GM10248 (cell line): ENCODE measurements at regions of chr1 and their contacts with region 1.

Region 1: DNA sequence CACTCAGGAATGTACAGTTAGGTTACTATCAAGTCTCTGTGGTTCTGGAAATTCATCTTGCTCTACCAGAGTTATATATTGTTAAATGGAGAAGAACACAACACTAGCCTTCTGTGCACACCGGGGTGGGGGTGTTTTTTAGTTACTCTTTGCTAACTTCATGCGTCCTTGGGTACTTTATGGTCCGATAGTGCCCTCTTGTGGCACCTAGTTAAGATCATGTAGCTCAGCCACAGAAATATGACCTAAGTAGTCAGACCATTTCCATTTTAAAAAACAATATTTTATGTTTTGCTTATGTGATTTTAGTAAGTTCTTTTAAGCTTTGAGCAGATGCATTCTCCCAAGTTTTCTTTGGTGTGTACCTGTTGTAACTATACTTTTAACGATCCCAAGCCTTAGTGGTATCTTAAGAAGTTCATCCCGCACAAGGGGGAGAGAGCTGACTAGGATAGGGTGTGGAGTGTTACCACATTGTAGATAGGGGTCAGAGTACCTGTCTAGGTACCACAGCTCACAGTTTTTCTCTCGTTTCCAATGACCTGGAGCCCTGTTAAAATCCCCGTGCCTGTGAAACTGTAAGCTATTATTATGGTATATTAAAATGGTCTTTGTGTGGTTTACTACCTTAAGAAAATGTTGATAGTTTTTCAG is 20.6 kb upstream of the SH3D21 start:
- DNase-seq: peak; percentile 71
- CTCF ChIP-seq: peak; percentile 43

Region 2: DNA sequence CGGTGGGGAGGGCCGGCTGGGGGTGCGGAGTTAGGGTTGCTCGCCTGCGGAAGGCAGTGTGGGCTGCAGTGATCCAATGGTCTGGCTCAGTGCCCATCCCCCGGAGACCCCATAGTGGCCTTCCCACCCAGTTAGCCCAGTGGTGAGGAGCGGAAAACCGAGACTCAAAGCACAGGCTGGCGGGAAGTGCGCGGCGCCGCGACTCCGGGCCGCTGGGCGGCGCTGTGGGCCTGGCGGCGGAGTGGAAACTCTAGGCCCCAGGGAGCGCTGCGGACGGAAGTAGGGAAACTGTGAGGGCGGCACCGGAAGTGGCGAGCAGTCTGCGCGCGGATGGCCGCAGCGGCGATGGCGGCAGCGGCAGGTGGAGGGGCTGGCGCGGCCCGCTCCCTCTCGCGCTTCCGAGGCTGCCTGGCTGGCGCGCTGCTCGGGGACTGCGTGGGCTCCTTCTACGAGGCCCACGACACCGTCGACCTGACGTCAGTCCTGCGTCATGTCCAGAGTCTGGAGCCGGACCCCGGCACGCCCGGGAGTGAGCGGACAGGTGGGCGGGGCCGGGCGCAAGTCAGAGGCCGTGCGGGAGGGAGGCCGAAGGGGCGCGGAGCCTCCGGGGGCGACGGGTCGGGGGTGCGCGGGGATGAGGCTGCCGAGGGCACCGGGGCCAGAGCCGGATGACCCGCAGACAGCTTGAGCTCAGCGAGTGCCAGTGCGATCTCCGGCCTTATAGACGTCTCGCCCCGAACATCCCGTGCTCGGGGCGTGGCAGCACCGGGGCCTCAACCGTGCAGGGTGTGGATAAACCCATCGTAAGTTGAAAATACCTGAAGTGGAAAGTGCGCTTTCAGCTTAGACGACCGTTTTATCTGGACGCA is 196.8 kb before region 1 on chr1 and contains the start of gene ADPRS:
- CTCF ChIA-PET with region 1: no interaction called
- POLR2A ChIA-PET with region 1: no interaction called
- DNase-seq: peak; percentile 94
- CTCF ChIP-seq: peak; percentile 98

Region 3: GRCh38 chr1:36134505-36135329 is 150.9 kb before region 1 on chr1:
- CTCF ChIA-PET with region 1: interaction called, 11 read pairs
- POLR2A ChIA-PET with region 1: no interaction called
- DNase-seq: peak; percentile 79
- CTCF ChIP-seq: peak; percentile 54

Region 4: GRCh38 chr1:36149237-36149972 is 136.2 kb before region 1 on chr1 and contains the start of gene TRAPPC3:
- CTCF ChIA-PET with region 1: interaction called, 45 read pairs
- POLR2A ChIA-PET with region 1: no interaction called
- DNase-seq: peak; percentile 98
- CTCF ChIP-seq: peak; percentile 99

Region 5: GRCh38 chr1:36223993-36224536 is 61.5 kb before region 1 on chr1 and contains the start of gene THRAP3:
- CTCF ChIA-PET with region 1: interaction called, 14 read pairs
- POLR2A ChIA-PET with region 1: no interaction called
- DNase-seq: peak; percentile 97
- CTCF ChIP-seq: no peak

Region 6: DNA sequence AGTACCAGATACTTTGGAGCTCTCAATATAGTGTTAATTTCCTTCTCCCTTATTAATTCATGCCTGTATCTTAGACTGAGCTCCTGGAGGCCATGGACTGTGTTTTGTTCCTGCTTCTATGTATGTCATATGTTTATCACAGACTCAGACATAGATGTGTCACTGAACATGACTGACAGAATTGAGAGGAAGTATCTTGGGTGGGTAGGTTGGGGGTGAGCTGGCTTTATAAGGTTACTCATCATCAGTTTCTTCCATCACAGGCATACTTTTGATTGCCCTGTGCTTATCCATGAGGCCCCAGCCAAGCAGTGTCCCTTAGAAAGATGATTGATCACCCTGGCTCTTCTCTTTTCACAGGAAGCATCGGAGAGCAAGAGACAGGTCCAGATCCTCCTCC is 15.0 kb after region 1 on chr1:
- CTCF ChIA-PET with region 1: interaction called, 26 read pairs
- POLR2A ChIA-PET with region 1: interaction called, 3 read pairs
- DNase-seq: no peak
- CTCF ChIP-seq: no peak

Region 7: DNA sequence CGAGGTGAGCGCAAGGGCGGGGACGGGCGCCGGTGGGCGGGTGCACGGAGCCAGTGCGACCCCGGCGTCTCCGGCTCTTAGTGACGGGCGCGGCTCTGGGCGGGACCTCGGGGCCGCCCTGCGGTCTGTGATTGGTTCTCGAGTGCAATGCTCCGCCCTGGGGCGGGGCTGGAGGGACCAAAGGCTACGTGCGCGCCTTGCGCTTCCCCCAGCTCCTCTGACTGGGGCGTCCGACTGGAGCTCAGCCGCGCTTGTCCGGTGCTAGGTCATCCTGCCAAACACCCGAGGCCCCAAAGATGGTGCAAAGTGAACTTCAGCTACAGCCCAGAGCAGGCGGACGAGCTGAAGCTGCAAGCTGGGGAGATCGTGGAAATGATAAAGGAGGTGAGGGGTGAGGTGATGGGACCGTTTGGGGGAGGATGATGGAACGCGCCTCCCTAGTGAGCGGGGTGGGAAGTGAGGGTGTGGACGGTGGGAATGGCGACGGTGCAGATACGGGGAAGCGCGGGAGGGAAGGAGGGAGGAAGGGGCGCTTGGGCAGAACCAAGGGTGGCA is 21.4 kb after region 1 on chr1:
- CTCF ChIA-PET with region 1: interaction called, 16 read pairs
- POLR2A ChIA-PET with region 1: interaction called, 3 read pairs
- DNase-seq: peak; percentile 100
- CTCF ChIP-seq: no peak

Region 8: GRCh38 chr1:36330940-36331339 is 45.4 kb after region 1 on chr1:
- CTCF ChIA-PET with region 1: no interaction called
- POLR2A ChIA-PET with region 1: no interaction called
- DNase-seq: no peak
- CTCF ChIP-seq: no peak